Posterior vena cava (tissue), 2 donors: ENCODE measurements at regions of chr19 and their contacts with region 1.

Region 1: DNA sequence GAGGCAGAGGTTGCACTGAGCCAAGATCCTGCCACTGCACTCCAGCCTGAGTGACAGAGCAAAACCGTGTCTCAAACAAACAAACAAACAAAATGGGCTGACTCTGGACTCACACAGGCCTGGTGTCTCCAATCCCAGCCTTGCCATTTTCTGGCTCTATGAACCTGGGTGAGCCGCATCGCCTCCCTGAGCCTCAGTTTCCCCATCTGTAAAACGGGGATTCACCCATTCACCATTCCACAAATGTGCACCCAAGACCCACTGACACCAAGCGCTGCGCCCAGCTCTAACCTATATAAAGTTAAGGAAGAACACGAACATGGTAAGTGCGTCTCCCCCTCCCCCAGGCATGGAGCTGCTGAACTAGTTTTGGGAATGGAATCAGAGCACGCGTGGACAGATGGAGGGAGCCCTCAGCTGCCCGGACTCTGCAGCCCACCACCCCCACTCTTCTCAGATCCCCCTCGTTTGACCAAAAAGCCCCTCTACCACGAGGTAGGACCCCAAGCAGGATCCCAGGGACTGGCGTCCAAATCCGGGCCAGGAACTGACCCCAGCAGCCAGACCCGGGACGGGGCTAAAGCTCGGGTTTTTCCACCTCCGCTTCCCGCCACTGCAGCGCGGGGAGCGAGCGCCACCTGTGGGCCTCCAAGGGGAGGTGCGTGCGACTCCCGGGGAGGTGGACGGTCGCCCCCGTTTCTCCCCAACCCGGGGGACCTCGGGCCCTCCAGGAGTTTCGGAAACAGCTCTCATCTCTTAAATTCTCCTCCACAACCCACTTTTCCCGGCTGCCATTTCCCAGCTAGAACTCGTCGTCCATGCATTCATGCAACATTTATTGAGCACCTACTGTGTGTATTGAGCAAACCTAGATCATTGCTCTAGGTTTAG is 33.0 kb upstream of the ADGRE5 start:
- DNase-seq: peak; percentile 90

Region 2: GRCh38 chr19:13880059-13881043 is 467.9 kb before region 1 on chr19:
- intact Hi-C with region 1: loop called in 1 of 2 experiments (anchors 10 kb)
- DNase-seq: peak; percentile 100

Region 3: DNA sequence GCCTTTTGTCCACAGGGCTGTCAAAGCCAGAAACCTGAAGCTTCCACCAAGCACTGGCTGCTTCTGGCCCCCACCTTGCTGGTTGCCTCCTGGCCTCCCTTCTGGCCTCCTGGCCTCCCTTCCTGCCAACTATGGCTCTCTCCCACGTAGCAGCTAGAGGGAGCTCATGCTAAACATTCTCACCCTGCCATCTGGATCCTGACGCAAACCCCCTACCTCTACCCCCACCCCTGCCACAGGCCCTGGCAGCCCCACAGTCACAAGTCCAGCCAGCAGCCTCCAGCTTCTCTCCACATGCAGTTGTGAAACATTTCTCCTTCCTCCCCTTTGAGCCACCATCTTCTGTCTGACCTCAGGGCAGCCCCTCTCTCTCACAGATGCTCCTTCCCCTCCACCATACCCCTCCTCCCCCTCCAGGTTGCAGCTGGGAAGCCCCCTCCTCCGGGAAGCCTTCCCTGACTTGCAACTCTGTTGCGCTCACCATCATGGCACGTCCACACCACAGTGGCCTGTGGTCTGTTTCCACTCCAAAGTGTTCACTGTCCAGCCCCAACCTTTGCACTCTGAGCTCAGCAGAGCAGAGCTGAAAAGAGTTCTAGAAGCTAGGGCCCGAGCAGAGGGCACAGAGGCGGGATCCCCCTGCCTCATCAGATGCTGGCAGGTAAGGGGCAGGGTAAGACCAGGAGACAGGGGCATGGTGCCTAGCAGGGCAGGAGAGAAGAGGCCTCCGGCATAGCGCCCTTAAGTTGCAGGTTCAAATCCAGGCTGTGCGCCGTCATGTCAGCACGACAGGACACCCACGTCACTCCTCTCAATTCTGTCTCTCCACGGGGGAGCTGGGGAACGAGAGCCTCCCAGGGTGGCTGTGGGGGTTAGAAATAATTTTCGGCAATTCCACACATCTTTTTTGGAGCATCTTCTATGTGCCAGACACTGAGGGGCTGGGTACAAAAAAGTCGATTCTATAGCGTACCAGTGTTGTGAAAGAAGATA is 149.6 kb before region 1 on chr19:
- intact Hi-C with region 1: loop called in 1 of 2 experiments (anchors 5 kb)
- DNase-seq: no peak

Region 4: DNA sequence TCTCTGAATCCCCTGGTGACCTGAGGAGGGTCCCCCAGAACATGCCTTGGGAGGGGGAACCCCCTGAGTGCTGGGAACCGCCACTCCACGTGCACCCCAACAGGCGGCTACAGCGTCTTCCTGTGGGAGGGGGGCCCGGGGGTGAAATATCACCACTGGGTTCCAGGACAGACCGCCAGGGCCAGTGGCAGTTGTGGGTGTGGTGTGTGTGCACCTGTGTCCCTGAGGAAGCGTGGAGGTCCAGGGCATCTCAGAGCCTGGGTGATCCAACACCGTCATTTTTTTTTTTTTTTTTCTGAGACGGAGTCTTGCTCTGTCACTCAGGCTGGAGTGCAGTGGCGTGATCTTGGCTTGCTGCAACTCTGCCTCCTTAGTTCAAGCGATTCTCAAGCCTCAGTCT is 37.2 kb after region 1 on chr19:
- intact Hi-C with region 1: loop called in 1 of 2 experiments (anchors 1 kb)
- DNase-seq: no peak

Region 5: DNA sequence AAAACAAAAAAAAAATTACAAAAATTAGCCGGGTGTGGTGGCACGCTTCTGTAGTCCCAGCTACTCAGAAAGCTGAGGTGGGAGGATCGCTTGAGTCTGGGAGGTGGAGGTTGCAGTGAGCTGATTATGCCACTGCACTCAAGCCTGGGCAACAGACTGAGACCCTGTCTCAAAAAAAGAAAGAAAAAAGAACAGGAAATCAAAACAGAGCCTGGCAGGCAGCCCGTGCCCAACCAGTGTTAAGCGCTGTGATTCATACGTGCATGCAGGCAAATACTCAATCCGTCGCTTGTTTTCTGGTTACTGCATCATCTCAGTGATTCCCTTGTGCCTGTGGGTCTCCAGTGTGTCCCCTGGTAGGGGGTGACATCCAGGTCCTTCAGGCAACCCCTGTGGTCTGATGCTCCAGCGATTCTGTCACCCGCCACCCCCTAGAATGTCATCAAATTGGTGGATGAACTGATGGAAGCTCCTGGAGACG is 52.7 kb after region 1 on chr19:
- intact Hi-C with region 1: no loop called
- DNase-seq: no peak

Region 6: DNA sequence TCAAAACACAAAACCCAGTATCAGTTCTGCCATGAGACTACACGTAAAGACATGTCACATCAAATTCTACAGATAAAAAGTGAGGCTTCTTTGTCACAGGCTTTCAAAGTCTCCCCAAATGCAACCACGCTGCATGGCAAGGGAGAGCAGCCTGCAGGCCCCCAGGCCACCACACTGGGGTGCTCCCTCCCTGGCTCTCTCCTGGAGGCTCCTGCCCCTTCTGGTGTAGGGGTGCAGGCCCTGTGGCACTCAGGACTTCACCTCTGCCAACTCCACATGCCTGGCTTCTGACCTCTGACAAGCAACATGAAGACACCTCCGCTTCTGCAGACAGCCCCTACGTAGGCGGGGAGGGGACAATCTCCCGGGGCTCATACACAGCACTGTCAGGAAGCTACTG is 1017.0 kb after region 1 on chr19:
- intact Hi-C with region 1: no loop called
- DNase-seq: no peak